ENCODE measurements at regions of chr17 and their contacts with region 1.

Region 1: GRCh38 chr17:46193626-46194392 is 580 bp upstream of the KANSL1 start:
- DNase-seq: peak; percentile 95 to 99 (median 98)
- ATAC-seq: peak; percentile 90 to 97 (median 95)
- H3K4me3 ChIP-seq: peak overlapping the region; percentile 70 to 100 (median 88)
- H3K27ac ChIP-seq: peak overlapping the region; percentile 98 to 100 (median 99)
- H3K4me1 ChIP-seq: peaks cover 0 to 49% (median 35%) of the 10 kb centered on the region in 12 donors
- H3K27me3 ChIP-seq: no peaks in the 10 kb centered on the region
- CTCF ChIP-seq: peak in 7 of 12 donors; percentile 7 to 54 (median 36)
- POLR2A ChIP-seq: peak in 1 of 2 donors; percentile 82

Region 2: DNA sequence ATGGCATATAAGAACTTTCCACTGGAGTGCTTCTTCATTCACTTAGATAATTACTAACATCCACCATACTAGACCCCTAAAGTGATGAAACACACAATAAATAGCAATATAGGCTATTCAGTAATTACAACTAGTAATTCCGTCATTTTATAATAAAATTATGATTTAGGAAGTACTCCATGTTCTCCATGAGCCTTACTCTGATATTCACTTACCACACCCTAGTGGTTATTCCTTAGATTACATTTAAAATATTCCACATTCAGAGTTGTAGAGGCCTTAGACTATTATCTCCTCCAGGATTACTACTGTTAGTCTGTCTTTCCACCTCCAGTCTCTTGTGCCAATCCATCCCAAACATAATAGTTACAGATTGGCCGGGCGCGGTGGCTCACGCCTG is 132.4 kb before region 1 on chr17:
- intact Hi-C with region 1: loop called in 1 of 10 experiments (anchors 5 kb)
- DNase-seq: no peak
- ATAC-seq: no peak
- H3K4me3 ChIP-seq: no peak overlapping the region
- H3K27ac ChIP-seq: no peak overlapping the region
- H3K4me1 ChIP-seq: peaks cover 0 to 19% (median 9%) of the 10 kb centered on the region in 12 donors
- H3K27me3 ChIP-seq: no peaks in the 10 kb centered on the region
- CTCF ChIP-seq: peak in 8 of 12 donors; percentile 19 to 52 (median 39)
- POLR2A ChIP-seq: no peak

Measured in heart left ventricle (tissue), 16 donors.